ENCODE measurements at regions of chr20 and their contacts with region 1.

Region 1: DNA sequence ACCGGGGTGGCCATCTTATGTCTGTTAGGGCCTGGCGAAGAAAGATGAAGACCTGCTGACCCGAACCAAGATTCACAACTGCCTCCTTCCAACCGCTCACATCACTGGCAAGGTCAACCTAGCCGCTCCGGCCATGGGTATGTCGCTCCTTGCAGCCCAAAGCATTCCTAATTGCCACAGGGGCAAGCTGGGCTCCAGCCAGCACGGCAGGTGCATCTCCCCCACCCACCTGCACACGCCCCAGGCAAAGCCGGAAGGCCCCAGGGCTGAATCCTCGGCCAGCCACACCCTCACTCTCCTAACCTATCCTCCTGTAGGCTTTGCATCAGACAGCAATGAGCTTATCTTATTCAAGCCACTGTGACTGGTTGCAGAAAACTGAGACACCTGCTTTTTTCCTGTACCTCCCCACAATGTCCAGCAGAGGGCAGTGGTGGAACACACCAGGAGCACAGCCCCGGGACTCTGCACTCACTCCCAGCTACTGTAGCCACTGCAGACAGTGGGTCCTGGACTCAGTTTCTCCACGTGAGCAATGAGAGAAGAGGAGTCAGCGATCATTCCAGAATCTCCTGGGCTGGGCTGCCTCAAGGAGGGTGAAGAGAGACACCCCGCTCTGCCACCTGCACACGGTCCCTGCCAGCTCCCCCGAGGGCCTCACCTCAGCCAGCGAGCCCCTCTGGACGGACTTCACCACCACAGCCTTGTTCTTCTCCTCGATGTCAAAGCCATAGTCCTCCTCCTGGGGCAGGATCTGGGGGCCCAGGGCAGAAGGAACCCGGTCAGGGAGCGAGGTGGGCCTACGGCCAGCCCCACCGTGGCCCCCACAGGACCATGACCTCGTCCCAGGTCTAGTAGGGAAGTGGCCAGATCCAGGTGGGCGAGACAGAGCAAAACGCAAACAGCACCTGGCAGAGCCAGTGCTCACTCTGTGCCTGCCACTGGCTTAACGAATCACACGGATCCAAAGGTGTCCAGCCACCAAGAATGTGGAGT is 170.0 kb downstream of the PREX1 start:
- DNase-seq: peak; percentile 71
- H3K4me3 ChIP-seq: no peak overlapping the region
- H3K27ac ChIP-seq: peak overlapping the region; percentile 7
- H3K4me1 ChIP-seq: peaks cover 3% of the 10 kb centered on the region
- H3K27me3 ChIP-seq: no peaks in the 10 kb centered on the region
- CTCF ChIP-seq: peak; percentile 87 to 88
- POLR2A ChIP-seq: no peak

Region 2: DNA sequence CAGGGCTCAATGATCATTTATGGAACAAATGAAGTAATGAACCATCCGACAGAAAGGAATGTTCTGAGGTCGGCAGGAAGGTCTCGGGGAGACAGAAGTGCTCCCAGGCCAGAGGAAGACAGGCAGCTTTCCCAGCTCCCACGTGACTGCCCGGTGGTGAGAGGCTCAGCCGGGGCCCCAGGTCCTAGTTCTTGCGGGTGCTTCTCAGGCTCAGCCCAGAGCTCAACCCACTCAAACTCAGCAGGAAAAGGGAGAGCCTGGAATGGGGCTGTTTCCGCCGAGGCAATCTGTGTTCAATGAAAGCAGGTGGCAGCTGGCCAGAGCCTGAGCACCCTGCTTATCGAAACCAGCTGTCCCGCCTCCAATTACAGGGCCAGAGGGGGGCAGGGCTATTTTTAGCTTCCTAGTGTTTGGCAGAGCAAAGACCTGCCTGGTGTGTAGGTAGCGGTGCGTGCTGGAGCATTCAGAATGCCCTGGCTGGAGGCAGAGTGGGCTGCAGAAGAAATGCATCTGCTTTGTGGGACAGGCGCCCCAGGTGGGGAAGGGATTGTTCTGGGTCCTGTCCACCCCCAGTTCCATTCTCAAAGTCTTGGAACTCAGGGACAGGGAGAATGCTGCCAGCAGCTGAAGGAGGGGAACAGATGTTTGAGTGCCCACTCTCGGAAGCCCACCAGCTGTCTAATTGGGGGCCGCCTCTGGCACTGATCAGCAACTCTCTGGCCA is 24.9 kb after region 1 on chr20:
- CTCF ChIA-PET with region 1: interaction called, 21 read pairs
- POLR2A ChIA-PET with region 1: no interaction called
- dilution Hi-C with region 1: no loop called
- intact Hi-C with region 1: no loop called
- DNase-seq: peak; percentile 89
- H3K4me3 ChIP-seq: no peak overlapping the region
- H3K27ac ChIP-seq: peak overlapping the region; percentile 48
- H3K4me1 ChIP-seq: peaks cover 56% of the 10 kb centered on the region
- H3K27me3 ChIP-seq: no peaks in the 10 kb centered on the region
- CTCF ChIP-seq: no peak
- POLR2A ChIP-seq: no peak

Region 3: GRCh38 chr20:48738399-48739304 is 80.9 kb after region 1 on chr20:
- CTCF ChIA-PET with region 1: interaction called, 18 read pairs
- POLR2A ChIA-PET with region 1: no interaction called
- dilution Hi-C with region 1: no loop called
- intact Hi-C with region 1: no loop called
- DNase-seq: peak; percentile 49
- H3K4me3 ChIP-seq: no peak overlapping the region
- H3K27ac ChIP-seq: no peak overlapping the region
- H3K4me1 ChIP-seq: peaks cover 19% of the 10 kb centered on the region
- H3K27me3 ChIP-seq: no peaks in the 10 kb centered on the region
- CTCF ChIP-seq: no peak
- POLR2A ChIP-seq: no peak

Region 4: DNA sequence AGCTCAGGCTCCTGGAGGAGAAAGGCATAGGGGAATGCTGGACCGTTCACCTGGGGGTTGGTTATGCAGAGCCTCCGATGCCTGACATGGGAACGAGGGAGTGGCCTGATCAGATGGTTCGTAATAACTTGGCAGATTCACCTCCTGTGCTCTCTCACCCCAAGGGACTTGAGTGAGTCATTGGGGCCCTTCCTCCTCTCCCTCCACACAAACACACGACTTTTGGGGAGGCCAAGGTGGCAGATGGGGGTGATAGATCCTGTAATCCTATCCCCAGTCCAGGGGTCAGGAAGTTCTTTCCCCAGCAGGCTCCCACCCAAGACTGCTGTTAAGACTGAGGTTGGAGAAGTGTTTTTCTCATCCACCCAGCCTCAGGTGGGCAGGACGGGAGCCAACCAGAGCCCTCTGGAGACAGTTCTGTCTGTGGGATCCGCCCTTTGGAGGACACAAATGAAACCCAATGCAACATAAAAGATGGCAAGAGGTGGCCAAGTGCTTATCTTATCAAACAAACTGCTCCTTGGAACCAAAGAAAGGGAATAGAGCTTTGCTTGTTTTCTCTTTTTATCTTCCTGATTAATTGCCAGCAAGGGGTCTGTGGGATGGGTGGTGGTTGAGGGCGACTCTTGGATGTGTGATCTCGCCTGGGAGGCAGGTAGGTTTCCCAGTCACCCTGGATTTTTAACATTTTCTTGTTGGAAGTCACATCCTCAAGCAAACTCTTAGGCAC is 218.3 kb after region 1 on chr20:
- CTCF ChIA-PET with region 1: interaction called, 27 read pairs
- POLR2A ChIA-PET with region 1: no interaction called
- dilution Hi-C with region 1: no loop called
- intact Hi-C with region 1: no loop called
- DNase-seq: no peak
- H3K4me3 ChIP-seq: no peak overlapping the region
- H3K27ac ChIP-seq: no peak overlapping the region
- H3K4me1 ChIP-seq: peaks cover 18% of the 10 kb centered on the region
- H3K27me3 ChIP-seq: no peaks in the 10 kb centered on the region
- CTCF ChIP-seq: no peak
- POLR2A ChIP-seq: no peak

Region 5: DNA sequence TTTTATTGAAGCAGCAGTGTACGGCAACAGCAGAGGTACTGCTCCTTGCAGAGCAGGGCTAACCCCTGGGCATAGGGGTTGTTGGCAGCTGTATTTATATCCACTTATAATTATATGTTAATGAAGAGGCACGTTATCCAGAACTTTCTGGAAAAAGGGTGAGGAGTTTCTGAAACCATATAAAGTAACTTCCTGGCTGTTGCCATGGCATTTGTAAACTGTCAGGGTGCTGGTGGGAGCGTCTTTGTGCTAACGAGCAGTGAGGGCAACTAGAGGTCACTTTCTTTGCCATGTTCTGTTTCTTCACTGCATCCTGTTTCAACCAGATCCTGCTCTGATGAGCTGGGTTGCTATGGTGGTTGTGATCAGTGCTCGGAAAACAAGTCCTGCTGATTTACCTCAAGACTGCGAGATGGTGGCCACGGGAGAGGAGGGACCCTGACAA is 252.6 kb after region 1 on chr20:
- CTCF ChIA-PET with region 1: interaction called, 126 read pairs
- POLR2A ChIA-PET with region 1: interaction called, 5 read pairs
- dilution Hi-C with region 1: loop called (anchors 25 kb)
- intact Hi-C with region 1: loop called (anchors 1 kb)
- DNase-seq: peak; percentile 41
- H3K4me3 ChIP-seq: no peak overlapping the region
- H3K27ac ChIP-seq: no peak overlapping the region
- H3K4me1 ChIP-seq: peaks cover 9% of the 10 kb centered on the region
- H3K27me3 ChIP-seq: no peaks in the 10 kb centered on the region
- CTCF ChIP-seq: no peak
- POLR2A ChIP-seq: no peak

Region 6: GRCh38 chr20:48986899-48987298 is 329.1 kb after region 1 on chr20:
- CTCF ChIA-PET with region 1: interaction called, 25 read pairs
- POLR2A ChIA-PET with region 1: no interaction called
- dilution Hi-C with region 1: no loop called
- intact Hi-C with region 1: loop called (anchors 1 kb)
- DNase-seq: peak; percentile 39
- H3K4me3 ChIP-seq: no peak overlapping the region
- H3K27ac ChIP-seq: no peak overlapping the region
- H3K4me1 ChIP-seq: peaks cover 22% of the 10 kb centered on the region
- H3K27me3 ChIP-seq: no peaks in the 10 kb centered on the region
- CTCF ChIP-seq: peak; percentile 35 to 55
- POLR2A ChIP-seq: no peak